IMR-90 (cell line): ENCODE measurements at regions of chr14 and their contacts with region 1.

Region 1: DNA sequence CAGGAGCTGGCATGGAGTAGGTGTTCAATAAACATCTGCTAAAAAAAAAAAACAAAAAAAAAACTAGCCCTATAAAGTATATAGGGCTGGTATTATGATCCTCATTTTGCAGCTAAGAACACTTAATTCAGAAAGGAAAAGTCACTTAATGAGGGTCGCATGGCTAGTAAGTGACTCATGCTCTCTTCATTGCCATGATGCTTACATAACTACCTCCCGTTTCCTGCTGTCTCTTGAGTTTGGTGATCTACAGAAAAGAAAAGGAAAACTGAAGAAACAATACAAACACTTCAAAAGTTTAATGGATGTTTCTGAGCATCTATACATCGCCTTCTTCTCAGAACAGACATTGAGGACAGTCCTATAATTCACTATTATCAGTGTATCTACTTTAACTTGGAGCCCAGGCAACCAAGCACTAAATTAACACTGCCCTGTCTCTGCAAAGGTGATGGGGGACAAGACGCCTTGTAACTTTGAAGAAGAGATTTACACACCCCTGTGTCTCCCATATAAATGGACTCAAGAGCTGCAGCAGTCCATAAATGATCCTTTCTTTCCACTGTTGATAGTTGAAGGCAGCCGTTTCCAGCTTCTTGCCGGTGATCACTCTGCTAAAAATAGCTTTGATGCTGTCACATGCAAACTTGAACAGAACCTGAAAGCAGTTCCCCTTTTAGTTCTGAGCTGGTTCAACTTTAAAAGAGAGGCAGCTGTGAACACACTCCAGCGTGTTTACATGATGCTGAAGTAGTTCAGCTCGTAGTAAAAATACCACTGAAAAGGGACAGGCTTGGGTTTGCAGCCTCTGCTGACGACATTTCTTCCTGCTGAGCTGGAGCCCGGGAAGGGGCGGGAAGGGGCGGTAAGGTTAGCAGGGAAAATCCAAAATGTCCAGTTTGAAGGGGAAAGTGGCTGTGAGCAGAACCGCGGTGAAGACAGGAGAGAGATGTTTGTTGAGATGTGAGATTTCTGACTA is 113.3 kb downstream of the FOXN3 start:
- DNase-seq: peak; percentile 95
- ATAC-seq: peak; percentile 81
- H3K4me3 ChIP-seq: peak overlapping the region; percentile 26; the same call in 1 of the 2 replicates
- H3K27ac ChIP-seq: peak overlapping the region; percentile 83
- H3K4me1 ChIP-seq: peaks cover 27% of the 10 kb centered on the region
- H3K27me3 ChIP-seq: no peaks in the 10 kb centered on the region
- CTCF ChIP-seq: no peak
- POLR2A ChIP-seq: peak; percentile 71
- RAD21 ChIP-seq: no peak; the same call in 1 of the 2 replicates

Region 2: DNA sequence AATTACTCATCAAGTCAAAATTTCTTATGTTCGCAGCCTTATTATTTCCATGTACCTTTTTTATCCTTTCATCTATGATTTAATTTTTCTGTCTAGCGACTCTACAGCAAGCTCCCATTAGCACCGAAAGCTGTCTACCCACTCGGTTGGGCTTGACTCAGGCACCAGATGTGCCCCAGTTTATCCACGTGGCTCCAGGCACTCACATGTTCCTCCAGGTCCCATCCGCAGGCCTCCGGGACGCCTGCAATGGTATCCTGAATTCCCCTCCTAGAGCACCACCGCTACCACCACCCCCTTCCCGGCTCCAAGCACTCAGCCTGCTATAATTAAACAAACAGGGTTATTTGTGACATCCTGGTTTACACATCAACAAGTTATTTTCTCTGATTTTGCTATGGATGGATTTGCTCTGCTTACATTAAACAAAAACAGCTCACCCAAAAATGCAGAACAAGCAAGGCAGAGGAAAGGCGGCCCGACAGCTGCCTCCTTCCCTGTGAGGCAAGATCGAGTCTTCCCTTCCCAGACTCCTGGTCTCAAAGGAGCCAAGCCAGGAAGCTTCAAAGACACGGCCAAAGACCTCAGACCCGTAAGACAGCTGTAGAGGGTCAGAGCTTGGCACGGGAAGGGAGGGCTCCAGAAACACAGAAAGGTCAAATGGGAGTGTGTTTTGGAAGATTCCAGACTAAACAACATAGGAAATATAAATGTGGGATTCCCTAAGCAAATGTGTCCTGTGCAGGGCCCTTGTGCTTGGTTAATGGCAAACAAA is 225.5 kb before region 1 on chr14:
- CTCF ChIA-PET with region 1: no interaction called
- POLR2A ChIA-PET with region 1: no interaction called
- dilution Hi-C with region 1: no loop called
- in situ Hi-C with region 1: no loop called
- intact Hi-C with region 1: no loop called
- DNase-seq: no peak
- ATAC-seq: no peak
- H3K4me3 ChIP-seq: no peak overlapping the region
- H3K27ac ChIP-seq: no peak overlapping the region
- H3K4me1 ChIP-seq: no peaks in the 10 kb centered on the region
- H3K27me3 ChIP-seq: peaks cover 38% of the 10 kb centered on the region
- CTCF ChIP-seq: no peak
- POLR2A ChIP-seq: no peak
- RAD21 ChIP-seq: no peak

Region 3: DNA sequence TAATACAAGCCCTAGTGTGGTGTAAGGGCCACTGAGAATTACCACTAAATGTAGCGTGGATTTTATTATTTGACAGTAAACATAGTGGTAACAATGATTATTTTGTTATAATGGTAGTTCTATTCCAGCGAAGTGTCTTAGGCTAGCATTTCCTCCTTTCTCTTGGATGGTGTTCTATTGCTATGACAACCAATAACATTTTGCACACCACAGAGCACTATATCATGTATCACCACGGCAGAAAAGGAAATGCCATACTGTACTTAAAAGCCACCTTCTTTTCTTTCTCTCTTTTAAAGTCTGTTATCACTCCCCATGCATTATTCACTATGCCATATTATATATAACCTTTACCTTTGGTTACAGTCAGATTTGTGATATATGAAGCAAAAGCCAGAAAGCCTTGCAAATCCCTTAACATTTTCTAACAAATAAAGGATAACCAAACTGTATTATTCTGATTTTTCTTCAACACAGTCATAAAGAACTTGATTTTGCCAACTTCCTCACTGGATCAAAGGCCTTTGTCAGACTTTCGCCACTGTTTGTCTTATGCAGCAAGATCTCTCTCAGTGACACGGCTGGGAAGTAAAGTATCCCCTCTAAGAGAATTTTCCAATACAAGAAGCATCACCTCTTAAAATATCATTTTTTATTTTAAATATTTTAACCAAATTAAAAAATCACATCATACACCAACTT is 82.5 kb before region 1 on chr14:
- CTCF ChIA-PET with region 1: no interaction called
- POLR2A ChIA-PET with region 1: no interaction called
- dilution Hi-C with region 1: no loop called
- in situ Hi-C with region 1: no loop called
- intact Hi-C with region 1: no loop called
- DNase-seq: peak; percentile 84
- ATAC-seq: peak; percentile 90
- H3K4me3 ChIP-seq: no peak overlapping the region
- H3K27ac ChIP-seq: no peak overlapping the region
- H3K4me1 ChIP-seq: peaks cover 3% of the 10 kb centered on the region; the same call in 1 of the 2 replicates
- H3K27me3 ChIP-seq: no peaks in the 10 kb centered on the region
- CTCF ChIP-seq: no peak
- POLR2A ChIP-seq: no peak
- RAD21 ChIP-seq: no peak; the same call in 1 of the 2 replicates

Region 4: DNA sequence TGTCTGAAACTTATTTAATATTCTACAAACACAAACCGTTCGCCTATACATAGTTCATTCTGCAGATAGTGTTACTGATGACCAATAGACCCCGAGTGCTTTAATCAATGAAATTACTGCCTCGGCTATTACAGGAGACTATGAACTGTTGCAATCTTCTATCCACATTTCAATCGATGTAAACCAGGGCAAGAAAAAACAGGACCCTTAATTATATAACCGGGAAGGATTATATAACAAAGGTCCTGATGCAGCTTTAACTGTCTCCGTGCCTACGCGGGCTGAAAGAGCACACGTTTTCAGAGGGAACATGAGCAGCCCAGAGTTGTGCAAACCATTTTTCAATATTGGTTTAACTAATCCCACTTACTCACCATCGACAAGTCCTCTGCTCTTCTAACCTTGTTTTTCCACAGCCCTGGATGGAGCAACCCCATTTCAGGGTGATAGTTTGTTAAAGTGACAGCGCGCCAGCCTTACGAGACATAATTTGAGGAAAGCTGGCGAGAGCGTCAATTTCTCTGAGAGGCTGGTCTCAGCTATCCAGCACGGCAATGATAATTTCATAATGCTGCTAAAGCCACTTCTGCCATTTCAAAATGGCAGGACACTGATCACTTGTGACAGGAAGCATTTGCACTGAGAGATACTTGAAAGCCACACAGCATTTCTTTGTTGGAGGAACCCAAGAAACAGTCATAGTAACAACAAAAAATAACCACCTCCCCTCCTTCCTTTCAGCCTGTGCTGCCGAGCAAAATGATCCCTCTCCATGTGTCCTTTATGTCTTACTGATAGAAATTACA is 71.3 kb before region 1 on chr14:
- CTCF ChIA-PET with region 1: no interaction called
- POLR2A ChIA-PET with region 1: no interaction called
- dilution Hi-C with region 1: no loop called
- in situ Hi-C with region 1: no loop called
- intact Hi-C with region 1: no loop called
- DNase-seq: no peak
- ATAC-seq: no peak
- H3K4me3 ChIP-seq: no peak overlapping the region
- H3K27ac ChIP-seq: no peak overlapping the region
- H3K4me1 ChIP-seq: peaks cover 2% of the 10 kb centered on the region; the same call in 1 of the 2 replicates
- H3K27me3 ChIP-seq: no peaks in the 10 kb centered on the region
- CTCF ChIP-seq: no peak
- POLR2A ChIP-seq: no peak
- RAD21 ChIP-seq: no peak

Region 5: DNA sequence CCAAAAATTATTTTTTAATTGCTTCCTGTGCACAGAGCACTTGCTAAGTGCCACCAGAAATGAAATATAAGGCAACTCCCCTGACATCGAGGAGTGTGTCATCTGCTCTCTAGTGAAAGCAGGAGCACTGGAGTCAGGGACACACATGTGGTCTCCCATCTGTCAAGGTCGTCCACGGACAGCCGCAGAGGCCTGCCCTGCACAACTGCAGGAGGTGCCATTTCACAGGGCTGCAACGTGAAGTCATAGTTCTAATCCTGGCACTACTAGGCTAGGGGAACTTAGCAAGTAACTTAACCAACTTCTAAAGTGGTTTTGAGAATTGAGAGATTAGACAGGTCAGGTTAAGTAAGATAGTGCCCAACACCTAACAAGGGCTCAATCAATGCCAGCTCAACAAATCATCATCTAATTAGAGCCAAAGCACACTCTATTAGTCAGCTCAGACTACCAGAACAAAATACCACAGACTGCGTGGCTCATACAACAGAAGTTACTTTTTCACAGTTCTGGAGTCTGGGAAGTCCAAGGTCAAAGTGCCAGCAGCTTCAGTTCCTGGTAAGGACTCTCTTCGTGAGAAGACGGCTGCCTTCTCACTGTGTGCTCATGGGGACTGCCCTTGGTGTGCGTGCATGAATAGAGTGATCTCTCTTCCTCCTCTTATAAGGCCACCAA is 82.6 kb after region 1 on chr14:
- CTCF ChIA-PET with region 1: no interaction called
- POLR2A ChIA-PET with region 1: no interaction called
- dilution Hi-C with region 1: no loop called
- in situ Hi-C with region 1: no loop called
- intact Hi-C with region 1: loop called (anchors 5 kb)
- DNase-seq: peak; percentile 22
- ATAC-seq: peak; percentile 50
- H3K4me3 ChIP-seq: no peak overlapping the region
- H3K27ac ChIP-seq: no peak overlapping the region
- H3K4me1 ChIP-seq: peaks cover 4% of the 10 kb centered on the region
- H3K27me3 ChIP-seq: no peaks in the 10 kb centered on the region
- CTCF ChIP-seq: no peak
- POLR2A ChIP-seq: no peak
- RAD21 ChIP-seq: no peak

Region 6: GRCh38 chr14:89416002-89416995 is 112.6 kb after region 1 on chr14:
- CTCF ChIA-PET with region 1: no interaction called
- POLR2A ChIA-PET with region 1: no interaction called
- dilution Hi-C with region 1: no loop called
- in situ Hi-C with region 1: no loop called
- intact Hi-C with region 1: loop called (anchors 10 kb)
- DNase-seq: peak; percentile 97
- ATAC-seq: peak; percentile 81
- H3K4me3 ChIP-seq: peak overlapping the region; percentile 62
- H3K27ac ChIP-seq: peak overlapping the region; percentile 60
- H3K4me1 ChIP-seq: peaks cover 12% of the 10 kb centered on the region
- H3K27me3 ChIP-seq: no peaks in the 10 kb centered on the region
- CTCF ChIP-seq: no peak
- POLR2A ChIP-seq: peak; percentile 69
- RAD21 ChIP-seq: no peak; the same call in 1 of the 2 replicates

Region 7: DNA sequence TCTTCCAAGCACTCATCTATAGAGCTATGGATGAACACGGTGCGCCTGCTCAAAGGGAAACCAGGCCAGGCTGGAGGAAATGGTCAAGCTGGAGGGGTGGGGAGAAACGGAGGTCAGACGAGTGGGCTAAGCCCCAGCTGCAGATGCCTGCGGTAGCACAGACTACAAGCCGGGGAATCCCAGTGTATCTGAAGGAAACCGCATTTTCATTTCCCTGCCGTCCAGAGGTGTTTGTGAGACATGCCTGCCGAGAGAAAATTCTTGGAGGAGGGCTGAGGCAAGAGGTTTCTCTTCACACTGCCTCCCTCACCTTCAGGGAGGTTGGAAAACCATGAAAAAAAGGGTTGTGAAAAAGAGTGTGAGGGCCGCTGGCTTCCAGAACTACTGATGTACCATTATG is 215.3 kb after region 1 on chr14:
- CTCF ChIA-PET with region 1: no interaction called
- POLR2A ChIA-PET with region 1: no interaction called
- dilution Hi-C with region 1: no loop called
- in situ Hi-C with region 1: no loop called
- intact Hi-C with region 1: no loop called
- DNase-seq: peak; percentile 96
- ATAC-seq: peak; percentile 98
- H3K4me3 ChIP-seq: no peak overlapping the region
- H3K27ac ChIP-seq: peak overlapping the region; percentile 17; the same call in 1 of the 2 replicates
- H3K4me1 ChIP-seq: peaks cover 7% of the 10 kb centered on the region
- H3K27me3 ChIP-seq: no peaks in the 10 kb centered on the region
- CTCF ChIP-seq: no peak
- POLR2A ChIP-seq: no peak
- RAD21 ChIP-seq: peak; percentile 28